ENCODE measurements at regions of chrX and their contacts with region 1.

Region 1: DNA sequence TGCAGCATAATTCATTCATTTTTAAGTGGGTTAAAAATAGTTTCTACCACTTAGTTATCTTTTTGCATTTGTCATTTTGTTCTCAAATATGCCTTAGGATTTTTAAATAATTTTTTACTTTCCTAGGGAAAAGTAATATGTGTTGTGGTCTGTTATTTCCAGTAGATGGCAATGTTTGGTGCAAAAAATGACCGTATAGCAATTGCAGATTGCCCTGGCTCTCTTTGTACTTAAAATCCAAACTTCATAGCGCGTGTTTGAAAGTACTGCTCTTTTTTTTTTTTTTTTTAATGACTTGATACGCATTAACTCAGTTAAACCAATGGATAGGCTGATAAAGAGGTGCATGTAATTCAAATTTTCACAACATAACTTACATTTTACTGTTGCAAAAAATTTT is 74.4 kb upstream of the RBMX start:
- DNase-seq: peak in 4 of 5 donors; percentile 10 to 17 (median 15)
- H3K4me3 ChIP-seq: no peak overlapping the region
- H3K4me3 Mint-ChIP-seq: no peak overlapping the region
- H3K27ac ChIP-seq: no peak overlapping the region
- H3K27ac Mint-ChIP-seq: no peak overlapping the region
- H3K4me1 ChIP-seq: no peaks in the 10 kb centered on the region
- H3K4me1 Mint-ChIP-seq: peaks cover 0 to 3% (median 0%) of the 10 kb centered on the region in 4 donors
- H3K27me3 ChIP-seq: no peaks in the 10 kb centered on the region
- H3K27me3 Mint-ChIP-seq: peaks cover 0 to 2% of the 10 kb centered on the region in 2 donors

Region 2: GRCh38 chrX:136200466-136200865 is 754.5 kb before region 1 on chrX:
- CTCF ChIA-PET with region 1: no interaction called
- POLR2A ChIA-PET with region 1: no interaction called
- intact Hi-C with region 1: no loop called
- DNase-seq: peak in 1 of 5 donors; percentile 35
- H3K4me3 ChIP-seq: no peak overlapping the region
- H3K4me3 Mint-ChIP-seq: no peak overlapping the region
- H3K27ac ChIP-seq: no peak overlapping the region
- H3K27ac Mint-ChIP-seq: peak overlapping the region in 4 of 7 donors; percentile 24 to 85 (median 67)
- H3K4me1 ChIP-seq: peaks cover 37% of the 10 kb centered on the region
- H3K4me1 Mint-ChIP-seq: peaks cover 22 to 50% (median 31%) of the 10 kb centered on the region in 4 donors
- H3K27me3 ChIP-seq: no peaks in the 10 kb centered on the region
- H3K27me3 Mint-ChIP-seq: no peaks in the 10 kb centered on the region

Region 3: DNA sequence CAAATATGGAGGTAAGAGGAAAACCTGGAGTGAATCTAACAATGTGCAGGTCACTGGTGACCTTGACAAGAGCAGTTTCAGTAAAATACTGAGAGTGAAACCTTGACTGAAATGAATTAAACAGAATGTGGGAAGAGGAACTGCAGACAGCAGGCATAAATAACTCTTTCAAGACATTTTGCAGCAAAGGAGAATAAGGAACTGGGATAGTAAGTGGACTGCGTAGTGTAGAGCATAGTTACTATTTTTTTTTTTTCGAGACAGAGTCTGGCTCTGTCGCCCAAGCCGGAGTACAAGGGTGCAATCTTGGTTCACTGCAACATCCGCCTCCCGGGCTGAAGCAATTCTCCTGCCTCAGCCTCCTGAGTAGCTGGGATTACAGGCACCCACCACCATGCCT is 98.4 kb before region 1 on chrX:
- CTCF ChIA-PET with region 1: no interaction called
- POLR2A ChIA-PET with region 1: no interaction called
- intact Hi-C with region 1: no loop called
- DNase-seq: no peak
- H3K4me3 ChIP-seq: no peak overlapping the region
- H3K4me3 Mint-ChIP-seq: no peak overlapping the region
- H3K27ac ChIP-seq: no peak overlapping the region
- H3K27ac Mint-ChIP-seq: peak overlapping the region in 2 of 7 donors; percentile 70 to 81
- H3K4me1 ChIP-seq: no peaks in the 10 kb centered on the region
- H3K4me1 Mint-ChIP-seq: peaks cover 0 to 15% (median 11%) of the 10 kb centered on the region in 4 donors
- H3K27me3 ChIP-seq: no peaks in the 10 kb centered on the region
- H3K27me3 Mint-ChIP-seq: no peaks in the 10 kb centered on the region

Region 4: DNA sequence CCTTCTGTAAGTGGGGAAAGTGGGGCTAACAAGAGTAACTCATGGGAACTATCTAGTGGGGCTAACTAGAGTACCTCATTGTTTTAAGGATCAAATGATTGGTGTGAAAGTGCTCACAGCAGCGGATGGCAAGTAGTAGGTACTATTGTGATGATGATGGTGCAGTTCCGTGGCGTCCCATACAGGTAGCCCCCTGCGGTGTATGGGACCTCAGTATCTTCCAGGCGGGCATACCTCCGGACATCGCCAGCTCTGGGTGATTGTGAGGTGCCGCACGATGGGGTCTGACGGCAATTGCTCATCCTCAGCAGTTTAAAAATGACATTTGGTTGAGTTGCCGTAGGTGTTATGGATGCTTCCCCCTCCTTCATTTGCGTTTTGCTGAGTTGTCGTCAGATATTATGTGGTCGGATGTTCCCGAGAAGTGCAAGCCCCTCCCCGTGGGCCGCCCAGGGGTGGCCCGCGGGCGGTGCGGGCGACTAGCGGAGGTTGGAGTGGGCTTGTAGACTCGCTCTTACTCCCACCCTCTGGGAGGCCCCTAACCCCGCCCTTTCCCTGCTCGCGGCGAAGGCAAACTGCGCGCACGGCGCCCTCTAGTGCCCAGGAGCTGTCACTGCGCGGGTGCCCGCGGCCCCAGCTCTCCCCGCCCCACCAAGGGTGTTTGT is 97.2 kb after region 1 on chrX:
- CTCF ChIA-PET with region 1: interaction called, 21 read pairs
- POLR2A ChIA-PET with region 1: no interaction called
- intact Hi-C with region 1: loop called (anchors 1 kb)
- DNase-seq: peak; percentile 76 to 84 (median 77)
- H3K4me3 ChIP-seq: peak overlapping the region; percentile 14 to 49
- H3K4me3 Mint-ChIP-seq: peak overlapping the region; percentile 84 to 96 (median 89)
- H3K27ac ChIP-seq: no peak overlapping the region
- H3K27ac Mint-ChIP-seq: peak overlapping the region in 5 of 7 donors; percentile 48 to 89 (median 65)
- H3K4me1 ChIP-seq: peaks cover 9% of the 10 kb centered on the region
- H3K4me1 Mint-ChIP-seq: peaks cover 0 to 11% (median 7%) of the 10 kb centered on the region in 4 donors
- H3K27me3 ChIP-seq: no peaks in the 10 kb centered on the region
- H3K27me3 Mint-ChIP-seq: peaks cover 9 to 14% of the 10 kb centered on the region in 2 donors